HepG2 (cell line): ENCODE measurements at regions of chr1 and their contacts with region 1.

Region 1: DNA sequence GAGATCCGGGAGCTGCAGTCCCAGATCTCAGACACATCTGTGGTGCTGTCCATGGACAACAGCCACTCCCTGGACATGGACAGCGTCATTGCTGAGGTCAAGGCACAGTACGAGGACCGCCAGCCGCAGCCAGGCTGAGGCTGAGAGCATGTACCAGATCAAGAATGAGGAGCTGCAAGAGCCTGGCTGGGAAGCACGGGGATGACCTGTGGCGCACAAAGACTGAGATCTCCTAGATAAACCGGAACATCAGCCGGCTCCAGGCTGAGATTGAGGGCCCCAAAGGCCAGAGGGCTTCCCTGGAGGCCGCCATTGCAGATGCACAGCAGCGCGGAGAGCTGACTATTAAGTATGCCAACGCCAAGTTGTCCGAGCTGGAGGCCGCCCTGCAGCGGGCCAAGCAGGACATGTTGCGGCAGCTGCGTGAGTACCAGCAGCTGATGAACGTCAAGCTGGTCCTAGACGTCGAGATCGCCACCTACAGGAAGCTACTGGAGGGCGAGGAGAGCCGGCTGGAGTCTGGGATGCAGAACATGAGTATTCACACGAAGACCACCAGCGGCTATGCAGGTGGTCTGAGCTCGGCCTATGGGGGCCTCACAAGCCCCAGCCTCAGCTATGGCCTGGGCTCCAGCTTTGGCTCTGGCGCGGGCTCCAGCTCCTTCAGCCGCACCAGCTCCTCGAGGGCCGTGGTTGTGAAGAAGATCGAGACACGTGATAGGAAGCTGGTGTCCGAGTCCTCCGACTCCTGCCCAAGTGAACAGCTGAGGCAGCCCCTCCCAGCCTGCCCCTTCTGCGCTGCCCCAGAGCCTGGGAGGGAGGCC is 25.5 kb downstream of the ETV3L start:
- DNase-seq: peak; percentile 73
- ATAC-seq: peak; percentile 89
- H3K4me3 ChIP-seq: peak overlapping the region; percentile 49 to 71 (median 54); a peak in 5 of 6 replicates
- H3K27ac ChIP-seq: no peak overlapping the region
- H3K4me1 ChIP-seq: no peaks in the 10 kb centered on the region
- H3K27me3 ChIP-seq: peaks cover 0 to 8% of the 10 kb centered on the region in 2 experiments; a peak in 1 of 5 replicates
- CTCF ChIP-seq: peak; percentile 93
- EP300 ChIP-seq: no peak
- POLR2A ChIP-seq: no peak
- RAD21 ChIP-seq: peak; percentile 71

Region 2: DNA sequence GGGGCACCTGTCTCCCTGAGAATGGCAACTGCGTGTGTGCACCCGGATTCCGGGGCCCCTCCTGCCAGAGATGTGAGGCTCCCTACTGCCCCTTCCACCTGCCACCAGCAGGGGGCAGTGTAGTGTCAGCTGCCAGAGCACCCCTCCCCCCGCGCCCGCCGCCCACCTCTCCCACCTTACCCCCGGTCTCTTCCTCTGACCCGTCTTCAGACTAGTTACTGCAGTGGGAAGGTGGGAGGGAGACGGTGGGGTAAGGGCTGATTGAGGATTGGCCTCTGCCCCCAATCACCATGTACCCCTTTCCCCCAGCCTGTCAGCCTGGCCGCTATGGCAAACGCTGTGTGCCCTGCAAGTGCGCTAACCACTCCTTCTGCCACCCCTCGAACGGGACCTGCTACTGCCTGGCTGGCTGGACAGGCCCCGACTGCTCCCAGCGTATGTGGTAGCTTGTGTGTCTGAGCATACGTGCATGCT is 163.8 kb before region 1 on chr1:
- CTCF ChIA-PET with region 1: no interaction called
- POLR2A ChIA-PET with region 1: no interaction called
- in situ Hi-C with region 1: no loop called
- intact Hi-C with region 1: loop called (anchors 1 kb)
- DNase-seq: peak; percentile 23
- ATAC-seq: peak; percentile 49
- H3K4me3 ChIP-seq: no peak overlapping the region
- H3K27ac ChIP-seq: no peak overlapping the region
- H3K4me1 ChIP-seq: peaks cover 15% of the 10 kb centered on the region
- H3K27me3 ChIP-seq: peaks cover 4 to 42% of the 10 kb centered on the region in 2 experiments; a peak in 4 of 5 replicates
- CTCF ChIP-seq: peak; percentile 76
- EP300 ChIP-seq: no peak
- POLR2A ChIP-seq: no peak
- RAD21 ChIP-seq: no peak

Region 3: DNA sequence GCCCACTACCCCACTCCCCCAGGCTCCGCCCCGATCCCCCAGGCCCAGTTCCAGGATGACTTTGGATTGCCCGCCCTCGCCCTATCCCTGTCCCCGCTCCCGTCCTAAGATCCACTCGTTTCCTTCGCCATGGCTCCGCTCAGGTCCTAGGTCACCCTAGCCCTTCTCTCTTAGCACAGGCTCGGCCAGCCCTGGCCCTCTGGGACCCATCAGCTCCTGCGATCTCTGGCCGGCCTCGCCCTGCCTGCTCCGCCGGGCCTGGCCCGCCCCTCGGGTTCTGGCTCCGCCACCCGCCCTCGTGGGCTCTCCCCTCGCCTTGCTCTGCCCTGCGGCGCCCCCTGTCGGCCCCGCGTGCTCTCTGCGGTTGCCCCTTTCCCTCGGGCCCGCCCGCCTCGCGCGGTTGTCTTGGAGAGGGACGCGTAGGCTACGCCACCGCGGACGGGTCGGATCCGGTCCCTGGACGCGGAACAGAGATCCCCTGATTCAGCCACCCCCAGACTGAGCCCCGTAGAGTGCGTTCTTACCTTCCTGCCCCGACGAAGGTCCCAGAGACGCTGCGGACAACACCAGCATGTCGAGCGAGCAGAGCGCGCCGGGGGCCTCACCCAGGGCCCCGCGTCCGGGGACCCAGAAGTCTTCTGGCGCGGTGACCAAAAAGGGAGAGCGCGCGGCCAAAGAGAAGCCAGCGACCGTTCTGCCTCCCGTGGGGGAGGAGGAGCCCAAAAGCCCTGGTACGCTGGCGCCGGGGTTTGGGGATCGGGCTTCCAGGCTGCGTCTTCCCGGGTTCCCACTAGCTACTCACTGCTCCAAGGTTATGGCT is 153.7 kb before region 1 on chr1 and contains the start of gene LRRC71:
- CTCF ChIA-PET with region 1: no interaction called
- POLR2A ChIA-PET with region 1: no interaction called
- in situ Hi-C with region 1: no loop called
- intact Hi-C with region 1: no loop called
- DNase-seq: peak; percentile 59
- ATAC-seq: peak; percentile 94
- H3K4me3 ChIP-seq: peak within 1 kb of the TSS in 1 of 3 experiments; percentile 52; a peak in 1 of 6 replicates
- H3K27ac ChIP-seq: no peak within 1 kb of the TSS
- H3K4me1 ChIP-seq: peaks cover 9% of the 10 kb centered on the region; the same call in 1 of the 2 replicates
- H3K27me3 ChIP-seq: peaks cover 21 to 63% of the 10 kb centered on the region in 2 experiments
- CTCF ChIP-seq: peak; percentile 91
- EP300 ChIP-seq: no peak
- POLR2A ChIP-seq: no peak
- RAD21 ChIP-seq: peak; percentile 91
- total RNA-seq, gene LRRC71: not detected in 2 replicates

Region 4: GRCh38 chr1:156980551-156980950 is 93.6 kb before region 1 on chr1:
- CTCF ChIA-PET with region 1: no interaction called
- POLR2A ChIA-PET with region 1: no interaction called
- in situ Hi-C with region 1: no loop called
- intact Hi-C with region 1: loop called (anchors 5 kb)
- DNase-seq: no peak
- ATAC-seq: no peak
- H3K4me3 ChIP-seq: no peak overlapping the region
- H3K27ac ChIP-seq: no peak overlapping the region
- H3K4me1 ChIP-seq: no peaks in the 10 kb centered on the region; the same call in 1 of the 2 replicates
- H3K27me3 ChIP-seq: no peaks in the 10 kb centered on the region
- CTCF ChIP-seq: no peak
- EP300 ChIP-seq: no peak
- POLR2A ChIP-seq: no peak
- RAD21 ChIP-seq: no peak

Region 5: DNA sequence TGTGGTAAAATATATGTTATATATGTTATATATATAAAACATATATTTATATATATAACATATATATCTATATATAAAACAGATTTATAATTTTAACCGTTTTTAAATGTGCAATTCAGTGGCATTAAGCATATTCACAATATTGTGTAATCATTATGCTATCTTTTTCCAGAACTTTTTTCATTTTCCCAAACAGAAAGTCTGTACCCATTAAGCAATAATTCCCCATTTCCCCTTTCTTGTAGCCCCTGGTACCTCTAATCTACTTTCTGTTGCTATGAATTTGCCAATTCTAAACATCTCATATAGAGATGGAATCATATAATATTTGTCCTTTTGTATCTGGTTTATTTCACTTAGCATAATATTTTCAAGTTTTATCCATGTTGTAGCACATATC is 17.9 kb before region 1 on chr1:
- CTCF ChIA-PET with region 1: no interaction called
- POLR2A ChIA-PET with region 1: no interaction called
- in situ Hi-C with region 1: no loop called
- intact Hi-C with region 1: loop called (anchors 2 kb)
- DNase-seq: no peak
- ATAC-seq: no peak
- H3K4me3 ChIP-seq: no peak overlapping the region
- H3K27ac ChIP-seq: no peak overlapping the region
- H3K4me1 ChIP-seq: peaks cover 23% of the 10 kb centered on the region
- H3K27me3 ChIP-seq: no peaks in the 10 kb centered on the region
- CTCF ChIP-seq: no peak
- EP300 ChIP-seq: no peak
- POLR2A ChIP-seq: no peak
- RAD21 ChIP-seq: no peak